Left cardiac atrium (tissue), 4 donors: ENCODE measurements at regions of chr10 and their contacts with region 1.

Region 1: DNA sequence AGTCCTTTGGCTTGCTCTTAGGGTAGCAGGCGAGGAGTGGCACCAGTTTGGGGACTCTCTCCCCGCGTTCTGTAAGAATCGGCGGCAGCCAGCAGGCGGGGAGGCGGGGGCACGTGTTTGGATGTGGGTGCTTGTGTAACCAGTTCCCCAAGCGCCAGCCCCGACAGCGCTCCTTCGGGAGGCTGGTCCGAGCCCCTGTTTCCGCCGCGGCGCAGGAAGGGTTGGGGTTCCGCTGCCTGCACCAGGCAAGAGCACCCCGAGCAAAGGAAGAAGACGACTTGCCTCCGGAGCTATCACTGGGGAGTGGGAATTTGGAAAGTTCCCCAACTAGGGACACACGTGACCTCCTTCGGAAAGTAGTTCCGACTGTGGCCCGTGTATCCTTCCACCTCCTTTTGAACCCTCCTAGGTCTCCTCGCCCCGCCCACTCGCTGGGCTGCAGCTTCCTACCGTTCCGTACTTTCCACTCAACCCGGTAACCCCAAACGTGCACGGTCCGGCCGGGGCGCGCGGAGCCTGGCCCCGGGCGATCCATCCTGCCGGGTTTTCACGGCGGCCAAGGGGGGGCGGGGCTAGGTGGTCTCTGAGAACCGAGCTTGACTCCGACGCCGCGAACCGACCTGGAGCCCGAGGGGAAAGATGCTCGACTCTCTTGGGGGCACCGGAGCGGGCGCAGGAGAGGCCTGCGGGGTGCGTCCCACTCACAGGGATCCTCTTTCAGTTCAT is 1.2 kb downstream of the KLLN start:
- DNase-seq: peak; percentile 97
- ATAC-seq: peak; percentile 81 to 91

Region 2: DNA sequence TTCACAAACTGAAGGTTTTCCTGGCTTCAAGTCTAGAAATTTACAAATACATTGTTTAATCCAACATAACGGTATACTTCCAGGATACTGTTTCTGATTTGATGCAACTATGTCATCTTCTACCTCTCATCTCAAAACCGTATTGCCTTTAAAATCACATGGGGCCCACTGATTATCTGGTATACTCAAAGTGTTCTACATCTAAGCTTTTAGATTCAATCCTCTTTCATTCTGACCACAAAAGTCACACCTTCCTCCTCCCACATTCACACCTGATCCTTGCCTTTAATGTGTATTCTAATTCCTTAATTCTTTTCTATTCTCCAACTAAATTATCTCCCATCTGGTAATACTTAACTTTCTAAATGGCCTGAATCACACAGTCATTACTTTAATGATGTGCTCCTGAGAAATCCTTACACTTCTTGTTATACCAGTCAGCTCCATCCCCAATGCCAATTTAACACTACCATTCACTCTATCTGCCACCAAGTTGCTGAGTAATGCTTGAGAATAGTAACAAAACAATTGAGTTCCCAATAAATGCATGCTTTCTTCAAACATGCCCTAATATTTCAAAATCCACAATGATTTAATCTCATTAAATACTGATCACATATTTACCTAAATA is 57.1 kb before region 1 on chr10:
- intact Hi-C with region 1: no loop called
- DNase-seq: no peak
- ATAC-seq: no peak

Region 3: GRCh38 chr10:87925570-87925969 is 63.5 kb after region 1 on chr10:
- intact Hi-C with region 1: loop called in 1 of 2 experiments (anchors 5 kb)
- DNase-seq: no peak
- ATAC-seq: no peak

Region 4: GRCh38 chr10:88095223-88095721 is 233.2 kb after region 1 on chr10:
- intact Hi-C with region 1: loop called in 1 of 2 experiments (anchors 5 kb)
- DNase-seq: no peak
- ATAC-seq: peak in 1 of 2 donors; percentile 66

Region 5: GRCh38 chr10:88186335-88186734 is 324.2 kb after region 1 on chr10:
- intact Hi-C with region 1: no loop called
- DNase-seq: no peak
- ATAC-seq: peak; percentile 63 to 77

Region 6: DNA sequence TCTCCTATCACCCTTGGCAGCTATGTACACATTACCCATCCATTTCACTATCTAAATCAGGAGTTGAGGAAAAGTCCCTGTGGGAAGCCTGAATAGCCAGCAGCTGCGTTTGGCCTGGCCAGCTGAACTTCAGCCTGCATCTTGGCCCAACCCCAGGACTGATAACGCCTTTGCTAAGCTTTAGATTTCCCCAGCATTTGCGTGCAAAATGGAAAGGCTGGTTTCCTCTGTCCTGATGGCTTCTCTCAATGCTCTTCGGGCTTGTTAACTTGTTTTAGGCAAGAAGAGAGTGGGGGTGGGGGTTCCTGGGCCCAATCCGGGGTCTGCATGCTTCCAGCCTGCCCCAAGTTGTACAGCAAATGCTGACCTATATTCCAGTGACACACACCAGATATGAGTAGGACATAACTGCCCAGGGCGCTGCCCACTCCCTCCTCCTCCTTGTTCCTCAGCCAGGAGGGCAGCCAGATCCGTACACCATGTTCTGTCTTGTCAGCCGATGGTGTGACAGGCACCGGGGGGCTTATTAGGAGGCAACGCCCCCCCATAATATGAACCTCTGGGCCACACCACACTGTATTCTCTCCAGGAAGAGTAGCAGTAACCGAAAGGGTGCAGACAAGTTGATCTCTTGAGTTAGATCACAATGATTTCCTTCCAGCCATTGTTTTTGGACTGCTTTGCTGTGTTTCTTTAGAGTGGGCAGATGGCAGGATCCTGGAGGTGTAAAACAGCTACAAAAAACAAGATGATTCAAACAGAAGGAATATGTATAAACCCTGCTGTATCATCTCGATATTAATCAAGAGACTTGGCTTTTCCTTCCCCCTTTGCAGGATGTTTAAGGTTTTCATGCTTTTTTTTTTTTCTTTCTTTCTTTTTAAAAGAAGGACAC is 382.0 kb after region 1 on chr10:
- intact Hi-C with region 1: loop called in 1 of 2 experiments (anchors 5 kb)
- DNase-seq: peak; percentile 84
- ATAC-seq: peak; percentile 88 to 91

Region 7: GRCh38 chr10:88386821-88387773 is 525.0 kb after region 1 on chr10:
- intact Hi-C with region 1: loop called in 1 of 2 experiments (anchors 5 kb)
- DNase-seq: peak; percentile 19
- ATAC-seq: peak; percentile 94 to 97

Region 8: DNA sequence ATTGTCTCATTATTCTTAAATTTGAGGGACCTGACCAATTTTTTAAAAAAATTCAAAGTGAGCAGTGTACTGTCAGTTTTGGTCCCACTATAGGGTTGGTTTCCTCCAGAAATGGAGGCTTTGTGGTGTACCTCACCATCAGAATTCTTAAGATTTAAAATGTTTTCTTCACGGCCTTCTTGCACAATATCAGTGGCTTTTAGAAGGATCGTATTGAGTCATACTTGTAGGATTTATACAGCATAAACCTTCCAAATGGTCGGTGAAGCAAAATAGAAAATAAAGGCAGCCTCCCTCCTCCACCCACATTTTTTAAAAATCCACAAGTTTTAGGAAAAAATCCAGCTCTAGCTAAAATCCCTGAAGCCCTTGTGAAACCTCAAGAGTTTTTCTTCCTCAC is 594.6 kb after region 1 on chr10:
- intact Hi-C with region 1: no loop called
- DNase-seq: no peak
- ATAC-seq: peak in 1 of 2 donors; percentile 64